ENCODE measurements at regions of chr12 and their contacts with region 1.

Region 1: DNA sequence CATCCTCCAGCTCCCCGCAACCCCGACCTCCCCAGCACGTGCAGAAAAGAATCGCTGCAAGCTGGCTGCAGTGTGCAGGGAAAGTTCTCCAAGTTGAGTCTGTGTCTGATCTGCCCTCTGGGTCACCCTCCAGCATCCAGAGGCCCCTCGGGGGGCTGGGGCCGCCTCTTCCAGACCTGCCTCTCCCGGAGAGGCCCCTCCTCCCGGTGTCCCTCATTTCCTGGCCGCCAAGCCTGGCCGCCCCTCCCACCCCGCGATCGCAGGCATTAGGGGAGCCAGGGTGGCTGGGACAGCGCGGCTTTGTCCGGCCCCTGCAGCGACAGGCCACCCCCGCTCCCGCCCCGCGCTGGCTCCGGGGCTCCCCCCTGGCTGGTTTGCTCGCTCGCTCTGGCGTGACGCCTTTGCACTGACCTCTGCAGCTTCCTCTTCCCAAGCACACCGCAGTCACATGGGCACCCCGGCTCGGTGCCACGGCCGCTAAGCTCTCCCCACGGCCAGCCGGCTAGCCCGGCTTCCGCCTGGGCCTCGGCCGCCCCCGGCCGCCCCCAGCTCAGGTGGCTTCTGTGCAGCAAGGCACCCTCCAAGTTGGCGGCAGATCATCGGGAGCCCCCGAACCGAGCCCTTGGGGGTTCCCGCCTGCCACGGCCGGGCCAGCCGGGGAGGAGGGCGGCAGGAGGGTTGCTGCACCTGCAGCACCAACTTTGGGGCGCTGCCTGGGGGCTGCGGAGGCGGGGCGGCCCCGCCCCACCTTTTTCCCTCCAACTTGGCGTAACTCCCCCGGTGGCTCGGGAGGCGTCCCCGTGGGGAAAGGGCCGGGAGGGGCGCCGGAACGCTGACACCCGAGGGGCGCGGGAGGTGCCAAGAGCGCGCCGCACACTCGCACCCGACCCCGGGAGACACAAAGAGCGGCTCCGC is 43.7 kb downstream of the KDM2B start:
- DNase-seq: peak; percentile 83
- H3K4me3 Mint-ChIP-seq: peak overlapping the region; percentile 70
- H3K27ac Mint-ChIP-seq: peak overlapping the region; percentile 60
- H3K4me1 Mint-ChIP-seq: peaks cover 43% of the 10 kb centered on the region
- H3K27me3 Mint-ChIP-seq: no peaks in the 10 kb centered on the region

Region 2: DNA sequence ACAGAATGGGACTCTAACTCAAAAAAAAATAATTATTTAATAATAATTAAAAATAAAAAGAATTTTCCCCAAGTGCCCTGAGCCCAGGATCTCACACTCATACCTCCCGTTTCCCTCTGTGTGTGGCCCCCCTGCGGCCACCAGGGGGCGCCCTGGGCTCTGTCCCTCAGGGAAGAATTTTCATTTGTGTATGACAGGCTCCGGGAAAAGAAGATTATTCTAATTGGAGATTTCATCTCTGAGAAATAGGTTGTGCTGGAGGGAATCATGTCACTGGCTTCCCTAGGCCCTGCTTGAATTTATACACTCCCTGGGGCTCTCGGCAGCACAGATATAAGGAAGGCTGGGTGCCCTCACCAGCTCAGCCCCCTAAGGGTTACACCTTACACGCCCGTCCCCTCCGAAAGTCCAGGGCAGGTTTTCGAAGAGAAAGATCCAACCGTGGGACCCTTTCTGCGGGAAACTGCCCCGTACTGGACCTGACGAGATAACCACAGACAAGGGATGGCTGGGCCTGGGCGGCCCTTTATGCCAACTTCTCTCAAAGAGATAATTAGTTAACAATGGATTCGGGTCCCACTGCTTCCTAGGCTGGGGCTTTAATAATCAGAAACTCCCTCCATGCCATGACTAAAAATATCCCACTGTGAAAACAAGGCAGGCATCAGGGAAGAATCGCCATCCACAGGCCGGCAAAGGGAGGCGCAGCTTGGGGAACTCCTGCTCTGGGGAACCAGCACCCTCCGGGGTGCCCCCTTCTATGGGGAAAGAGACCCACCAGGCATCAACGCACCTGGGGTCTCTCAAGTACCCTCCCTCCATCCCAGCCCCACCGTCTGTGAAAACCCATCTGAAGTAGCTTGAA is 37.0 kb before region 1 on chr12:
- CTCF ChIA-PET with region 1: interaction called, 7 read pairs
- POLR2A ChIA-PET with region 1: no interaction called
- intact Hi-C with region 1: loop called (anchors 5 kb)
- DNase-seq: peak; percentile 79
- H3K4me3 Mint-ChIP-seq: no peak overlapping the region
- H3K27ac Mint-ChIP-seq: no peak overlapping the region
- H3K4me1 Mint-ChIP-seq: peaks cover 7% of the 10 kb centered on the region
- H3K27me3 Mint-ChIP-seq: no peaks in the 10 kb centered on the region

Region 3: DNA sequence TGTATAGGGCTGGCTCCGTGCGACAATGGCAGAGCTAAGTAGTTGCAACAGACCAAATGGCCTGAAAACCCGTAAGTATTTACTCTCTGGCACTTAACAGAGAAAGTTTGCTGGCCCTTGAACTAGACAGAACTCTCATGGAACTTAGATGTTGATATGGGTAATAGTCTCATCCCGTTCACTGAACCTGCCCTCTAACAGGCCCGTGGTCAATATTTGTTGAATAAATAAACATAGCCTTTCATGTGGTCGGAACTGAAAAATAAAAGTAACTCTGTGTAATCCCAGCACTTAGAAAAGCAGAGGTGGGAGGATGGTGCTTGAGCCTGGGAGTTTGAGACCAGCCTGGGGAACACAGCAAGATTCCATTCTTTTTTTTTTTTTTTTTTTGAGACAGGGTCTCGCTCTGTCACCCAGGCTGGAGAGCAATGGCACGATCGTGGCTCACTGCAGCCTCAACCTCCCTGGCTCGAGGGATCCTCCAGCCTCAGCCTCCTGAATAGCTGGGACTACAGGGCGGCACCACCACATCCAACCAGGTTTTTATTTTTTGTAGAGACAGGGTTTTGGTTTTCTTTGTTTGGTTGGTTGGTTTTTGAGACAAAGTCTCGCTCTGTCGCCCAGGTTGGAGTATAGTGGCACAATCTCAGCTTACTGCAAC is 13.9 kb after region 1 on chr12:
- CTCF ChIA-PET with region 1: interaction called, 13 read pairs
- POLR2A ChIA-PET with region 1: no interaction called
- intact Hi-C with region 1: no loop called
- DNase-seq: no peak
- H3K4me3 Mint-ChIP-seq: no peak overlapping the region
- H3K27ac Mint-ChIP-seq: no peak overlapping the region
- H3K4me1 Mint-ChIP-seq: peaks cover 5% of the 10 kb centered on the region
- H3K27me3 Mint-ChIP-seq: no peaks in the 10 kb centered on the region

Region 4: DNA sequence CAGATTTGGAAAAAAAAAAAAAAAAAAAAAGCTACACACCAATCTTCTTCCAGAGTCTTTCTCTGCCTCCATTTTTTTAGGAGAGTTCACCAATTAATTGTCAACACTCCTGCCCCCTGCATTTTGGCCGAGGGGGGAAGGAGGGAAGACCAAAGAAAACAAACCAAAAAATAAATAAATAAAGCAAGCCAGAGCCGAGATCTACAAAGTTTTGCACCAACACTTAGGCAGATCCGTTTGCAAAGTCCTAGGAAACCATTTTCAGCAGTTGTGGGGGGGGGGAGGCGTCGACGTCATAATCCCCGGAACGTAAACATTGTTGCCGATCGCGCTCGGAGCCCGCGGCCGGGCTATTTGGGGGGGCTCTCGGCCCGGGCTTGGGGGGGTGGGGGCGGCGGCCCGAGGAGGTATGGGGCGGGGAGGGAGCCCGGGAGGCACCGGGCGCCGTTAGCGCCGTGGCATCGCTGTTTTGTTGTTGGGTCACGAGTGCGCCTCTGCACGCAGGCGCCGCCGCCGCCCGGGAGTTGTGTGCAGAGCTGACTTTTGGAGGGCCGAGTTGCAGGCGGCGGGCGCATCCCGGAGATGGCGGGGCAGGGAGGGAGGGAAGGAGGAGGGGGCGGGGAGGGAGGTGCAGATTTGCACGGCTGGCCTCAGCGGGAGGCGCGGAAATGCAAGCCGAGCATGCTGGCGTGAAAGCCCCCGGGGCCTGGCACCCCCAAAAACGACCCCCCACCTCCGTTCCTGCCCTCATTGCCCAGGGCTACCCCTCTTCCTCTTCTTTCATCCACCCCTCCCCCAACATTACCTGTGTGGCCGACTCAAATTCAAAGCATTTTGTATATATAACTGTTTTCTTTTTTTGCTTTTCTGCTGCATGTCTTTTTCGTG is 43.1 kb after region 1 on chr12:
- CTCF ChIA-PET with region 1: interaction called, 3 read pairs
- POLR2A ChIA-PET with region 1: interaction called, 9 read pairs
- intact Hi-C with region 1: loop called (anchors 2 kb)
- DNase-seq: peak; percentile 85
- H3K4me3 Mint-ChIP-seq: peak overlapping the region; percentile 86
- H3K27ac Mint-ChIP-seq: peak overlapping the region; percentile 92
- H3K4me1 Mint-ChIP-seq: peaks cover 33% of the 10 kb centered on the region
- H3K27me3 Mint-ChIP-seq: no peaks in the 10 kb centered on the region

Region 5: DNA sequence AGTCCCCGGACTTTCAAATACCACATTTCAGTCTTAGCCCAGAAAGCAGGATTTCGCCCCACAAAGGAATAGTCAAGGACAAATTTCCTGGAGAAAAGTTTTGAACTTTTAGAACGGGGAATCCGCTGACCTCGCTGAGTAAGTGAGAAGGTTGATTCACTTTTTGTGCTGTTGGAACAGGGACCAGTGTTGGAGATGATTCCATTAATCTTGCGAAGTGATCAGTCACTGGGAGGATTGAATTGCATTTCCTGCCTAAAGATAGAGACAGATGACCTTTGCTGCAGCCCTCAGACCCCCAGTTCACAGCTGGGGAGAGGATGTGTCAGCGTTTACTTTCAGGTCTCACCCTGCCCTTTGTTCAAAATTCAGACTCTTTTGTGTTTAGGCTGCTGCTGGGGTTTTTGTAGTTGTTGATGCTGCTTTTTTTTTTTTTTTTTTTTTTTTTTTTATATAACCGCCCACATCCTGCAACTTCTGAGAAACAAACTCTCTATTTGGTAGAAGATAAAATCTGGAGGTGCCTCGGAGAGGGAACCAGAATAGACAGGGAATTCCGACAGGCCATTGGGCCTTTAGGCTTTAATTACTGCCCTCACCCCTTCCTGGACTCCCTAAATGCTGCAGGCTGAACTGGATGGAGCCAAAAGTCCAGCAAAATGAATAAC is 53.5 kb after region 1 on chr12:
- CTCF ChIA-PET with region 1: no interaction called
- POLR2A ChIA-PET with region 1: no interaction called
- intact Hi-C with region 1: loop called (anchors 1 kb)
- DNase-seq: peak; percentile 80
- H3K4me3 Mint-ChIP-seq: peak overlapping the region; percentile 82
- H3K27ac Mint-ChIP-seq: peak overlapping the region; percentile 98
- H3K4me1 Mint-ChIP-seq: peaks cover 26% of the 10 kb centered on the region
- H3K27me3 Mint-ChIP-seq: no peaks in the 10 kb centered on the region

Measured in activated CD4-positive, alpha-beta memory T cell treated with anti-CD3 and anti-CD28 coated beads for 36 hours (primary cell).